MCF 10A (cell line): ENCODE measurements at regions of chr12 and their contacts with region 1.

Region 1: DNA sequence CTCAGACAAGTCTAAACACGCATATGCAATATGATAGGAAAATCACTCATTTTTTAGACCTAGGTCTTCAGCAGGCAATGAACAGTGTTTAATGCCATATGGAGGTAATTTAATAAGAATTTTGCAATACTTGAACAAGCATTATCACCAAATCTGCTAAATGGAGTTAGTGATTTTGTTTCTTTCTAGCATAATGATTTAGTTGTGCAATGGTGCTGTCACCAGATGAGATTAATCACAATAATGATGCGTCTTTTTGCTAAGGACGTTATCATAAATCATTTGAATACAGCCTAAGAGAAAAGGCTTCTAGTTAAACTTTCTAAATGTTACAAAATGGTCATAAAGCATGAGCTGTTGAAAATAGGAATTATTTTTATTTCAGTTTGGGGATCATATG is 170.0 kb upstream of the SLC16A7 start:
- DNase-seq: no peak
- H3K4me3 Mint-ChIP-seq: no peak overlapping the region
- H3K27ac Mint-ChIP-seq: no peak overlapping the region
- H3K4me1 Mint-ChIP-seq: no peaks in the 10 kb centered on the region
- H3K27me3 Mint-ChIP-seq: no peaks in the 10 kb centered on the region
- CTCF ChIP-seq: no peak

Region 2: DNA sequence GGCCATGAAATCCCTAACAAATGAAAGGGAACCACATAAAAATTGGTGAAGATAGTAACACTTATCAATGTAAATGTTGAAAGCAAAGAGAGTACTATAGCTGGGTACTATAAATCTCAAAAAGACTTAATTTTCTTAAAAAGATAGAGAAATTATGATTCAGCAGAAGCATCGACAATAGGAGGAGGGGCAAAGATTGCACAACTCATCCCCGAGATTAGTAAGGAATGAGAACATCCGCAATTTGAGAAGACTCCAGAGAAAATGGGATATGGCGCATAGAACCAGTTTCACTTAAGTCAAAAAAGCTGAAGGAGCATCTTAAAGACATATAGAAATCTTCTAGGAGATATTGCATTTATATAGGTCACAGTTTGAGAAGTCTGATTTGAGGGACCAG is 50.2 kb before region 1 on chr12:
- CTCF ChIA-PET with region 1: no interaction called
- POLR2A ChIA-PET with region 1: no interaction called
- intact Hi-C with region 1: loop called (anchors 2 kb)
- DNase-seq: peak; percentile 8
- H3K4me3 Mint-ChIP-seq: no peak overlapping the region
- H3K27ac Mint-ChIP-seq: no peak overlapping the region
- H3K4me1 Mint-ChIP-seq: no peaks in the 10 kb centered on the region
- H3K27me3 Mint-ChIP-seq: no peaks in the 10 kb centered on the region
- CTCF ChIP-seq: no peak

Region 3: DNA sequence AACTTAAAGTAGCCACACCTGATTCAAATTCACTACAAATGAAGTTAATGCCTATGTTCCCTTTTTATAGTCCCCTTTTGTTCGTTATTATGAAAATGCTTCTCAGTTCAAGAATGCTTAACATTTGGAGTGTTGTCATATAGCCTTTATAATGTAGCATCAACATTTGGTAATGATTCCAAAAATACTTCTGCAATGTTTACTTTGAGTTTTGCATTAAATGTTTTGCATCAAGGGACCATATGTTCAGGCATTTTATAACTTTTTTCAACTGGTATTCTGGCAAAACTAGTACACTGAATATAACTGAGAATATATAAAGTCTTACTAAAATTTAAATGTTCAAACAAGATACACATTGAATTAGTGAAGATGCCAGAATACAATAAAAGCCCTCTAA is 39.6 kb before region 1 on chr12:
- CTCF ChIA-PET with region 1: no interaction called
- POLR2A ChIA-PET with region 1: no interaction called
- intact Hi-C with region 1: no loop called
- DNase-seq: no peak
- H3K4me3 Mint-ChIP-seq: no peak overlapping the region
- H3K27ac Mint-ChIP-seq: no peak overlapping the region
- H3K4me1 Mint-ChIP-seq: peaks cover 17% of the 10 kb centered on the region
- H3K27me3 Mint-ChIP-seq: no peaks in the 10 kb centered on the region
- CTCF ChIP-seq: no peak